Dorsolateral prefrontal cortex (tissue), 120 donors: ENCODE measurements at regions of chr3 and their contacts with region 1.

Region 1: DNA sequence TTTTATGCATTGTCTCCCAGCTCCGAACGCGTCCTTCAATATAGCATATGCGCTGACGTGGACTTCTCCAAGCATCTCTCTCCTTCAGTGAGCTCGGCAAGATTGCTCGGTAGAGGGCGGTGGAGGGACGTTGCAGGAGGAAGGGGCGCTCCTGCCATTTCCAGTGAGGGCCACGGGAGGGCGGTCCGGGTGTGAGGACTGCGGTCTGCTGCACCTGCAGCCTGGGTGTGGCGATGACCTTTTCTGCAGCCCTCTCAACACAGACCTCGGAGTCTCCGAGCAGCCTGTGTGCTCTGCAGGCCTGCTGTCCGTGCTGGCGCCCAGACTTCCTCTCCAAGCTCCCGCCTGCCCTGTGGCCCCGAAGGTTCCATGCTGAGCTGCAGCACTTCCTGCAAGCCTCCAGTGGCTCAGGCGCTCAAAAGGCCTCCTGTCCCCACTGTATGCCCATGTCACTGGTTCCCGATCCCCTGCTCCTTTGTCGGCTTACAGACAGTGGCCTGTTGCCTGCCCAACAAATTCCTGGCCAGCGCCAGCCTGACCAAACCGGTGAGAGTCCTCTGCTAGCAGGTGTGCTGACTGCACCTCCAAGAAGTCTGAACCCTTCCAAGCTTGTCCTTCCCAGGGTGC is 8.9 kb upstream of the RTP3 start:
- DNase-seq: peak; percentile 79 to 91 (median 86)
- H3K4me3 ChIP-seq: peak overlapping the region in 23 of 59 donors; percentile 10 to 48 (median 33)
- H3K27ac ChIP-seq: peak overlapping the region in 2 of 59 donors; percentile 17 to 61
- H3K27me3 ChIP-seq: no peaks in the 10 kb centered on the region
- CTCF ChIP-seq: peak; percentile 29 to 99 (median 95)

Region 2: DNA sequence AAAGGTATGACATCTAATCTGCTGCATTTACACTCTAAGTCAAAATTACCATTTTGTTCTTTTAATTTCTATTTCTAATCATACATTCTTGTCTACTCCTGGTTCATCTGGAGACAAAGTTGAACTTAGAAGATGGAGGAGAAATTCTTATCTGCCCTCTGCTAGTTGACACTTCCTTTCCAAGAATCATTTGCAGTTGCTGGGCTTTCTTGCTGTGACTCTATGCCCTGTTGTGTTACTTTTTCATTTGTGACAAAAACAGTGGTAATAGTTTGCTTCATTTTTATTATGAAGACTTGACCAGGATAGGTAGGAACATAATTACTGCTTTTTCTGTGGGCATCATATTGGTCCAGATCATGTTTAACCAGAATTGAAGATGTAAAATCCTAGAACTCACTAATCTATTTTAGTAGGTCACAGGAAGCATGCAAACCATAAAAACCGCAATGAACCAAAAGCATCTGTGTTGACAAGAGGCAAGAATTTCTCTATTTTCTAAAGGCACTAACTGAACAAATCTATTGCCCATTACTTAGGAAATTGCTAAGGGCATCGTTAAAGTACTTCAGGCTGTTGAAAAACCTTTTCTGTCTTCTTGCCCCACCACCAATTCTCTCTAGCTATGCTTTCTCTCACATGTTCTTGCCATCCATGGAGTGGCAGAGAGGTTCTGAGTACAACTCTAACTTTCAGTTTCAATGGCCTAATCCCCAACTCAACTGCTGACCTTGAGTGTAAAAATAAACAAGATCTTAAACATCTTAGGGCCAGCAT is 139.2 kb before region 1 on chr3:
- intact Hi-C with region 1: no loop called
- DNase-seq: no peak
- H3K4me3 ChIP-seq: no peak overlapping the region
- H3K27ac ChIP-seq: no peak overlapping the region
- H3K27me3 ChIP-seq: peaks cover 0 to 30% (median 5%) of the 10 kb centered on the region in 45 donors
- CTCF ChIP-seq: no peak

Region 3: DNA sequence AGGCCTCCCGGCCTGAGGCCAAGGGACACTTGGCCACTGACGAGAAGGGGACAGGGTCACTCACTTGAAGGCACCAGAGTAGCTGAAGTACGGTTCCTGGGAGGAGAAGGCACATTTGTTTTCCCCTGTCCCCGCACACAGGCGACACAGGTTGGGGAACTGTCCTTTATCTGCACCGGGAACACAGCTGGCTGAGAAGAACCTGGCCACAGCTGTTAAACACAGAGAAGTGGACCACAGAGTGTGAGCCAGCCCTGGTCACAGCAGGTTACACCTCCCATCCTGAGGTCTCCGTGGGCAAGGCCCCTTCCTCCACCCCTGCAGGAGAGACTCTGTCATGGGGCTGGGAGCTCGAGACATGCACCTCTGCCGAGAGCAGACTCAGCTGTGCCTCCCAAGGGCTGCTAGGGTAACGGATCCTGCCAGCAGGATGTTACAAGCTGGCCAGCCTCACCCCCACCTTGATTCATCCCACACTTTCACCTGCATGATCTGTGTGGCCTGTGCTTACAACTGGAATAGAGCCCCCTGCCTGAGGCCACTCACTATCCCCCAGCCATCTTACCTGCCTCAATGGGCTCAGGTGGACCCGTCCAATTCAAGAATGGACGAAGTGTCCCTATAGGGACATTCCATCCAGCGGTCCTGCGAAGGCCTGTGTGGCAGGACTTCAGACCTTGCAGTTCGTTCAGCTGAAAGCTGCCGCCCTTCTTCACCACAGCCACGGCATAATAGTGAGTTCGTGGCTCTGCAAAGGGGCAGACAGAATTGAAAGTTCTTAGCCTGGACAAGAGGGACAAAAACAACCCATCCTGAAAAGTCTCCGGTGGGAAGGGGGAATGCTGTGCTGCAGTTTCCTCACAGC is 33.4 kb before region 1 on chr3:
- intact Hi-C with region 1: no loop called
- DNase-seq: no peak
- H3K4me3 ChIP-seq: no peak overlapping the region
- H3K27ac ChIP-seq: no peak overlapping the region
- H3K27me3 ChIP-seq: peaks cover 0 to 5% (median 0%) of the 10 kb centered on the region in 45 donors
- CTCF ChIP-seq: no peak

Region 4: DNA sequence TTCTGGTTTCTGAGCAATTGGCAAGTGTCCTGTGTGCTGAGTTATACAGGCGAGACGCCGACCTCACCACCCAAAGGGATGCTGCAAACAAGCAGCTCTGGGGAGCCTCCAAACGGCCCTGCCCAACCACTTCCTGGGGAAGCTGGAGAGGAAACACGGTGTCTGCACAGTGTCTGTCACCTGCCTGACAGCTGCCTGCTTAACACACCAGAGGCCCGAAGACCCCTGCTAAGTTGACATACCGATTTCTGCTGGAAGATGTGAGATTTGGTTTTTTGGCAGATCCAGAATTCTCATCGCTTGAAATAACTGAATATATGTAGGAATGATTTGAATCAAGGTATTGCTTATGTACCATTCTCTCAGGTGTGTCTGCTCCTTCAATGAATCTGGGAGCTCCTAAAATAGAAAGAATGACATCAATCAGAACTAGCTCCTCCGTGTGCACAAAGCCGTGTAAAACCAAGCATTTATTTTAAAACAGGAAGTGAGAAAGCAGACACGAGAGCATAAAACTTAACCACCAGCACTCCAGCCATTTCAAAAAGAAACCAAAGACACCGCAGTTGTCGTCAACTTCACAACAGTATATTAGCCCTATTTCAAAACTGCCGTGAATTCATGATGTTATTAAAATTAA is 50.1 kb after region 1 on chr3:
- intact Hi-C with region 1: no loop called
- DNase-seq: peak in 3 of 10 donors; percentile 18 to 52 (median 37)
- H3K4me3 ChIP-seq: no peak overlapping the region
- H3K27ac ChIP-seq: peak overlapping the region in 3 of 59 donors; percentile 7 to 52 (median 14)
- H3K27me3 ChIP-seq: no peaks in the 10 kb centered on the region
- CTCF ChIP-seq: no peak

Region 5: DNA sequence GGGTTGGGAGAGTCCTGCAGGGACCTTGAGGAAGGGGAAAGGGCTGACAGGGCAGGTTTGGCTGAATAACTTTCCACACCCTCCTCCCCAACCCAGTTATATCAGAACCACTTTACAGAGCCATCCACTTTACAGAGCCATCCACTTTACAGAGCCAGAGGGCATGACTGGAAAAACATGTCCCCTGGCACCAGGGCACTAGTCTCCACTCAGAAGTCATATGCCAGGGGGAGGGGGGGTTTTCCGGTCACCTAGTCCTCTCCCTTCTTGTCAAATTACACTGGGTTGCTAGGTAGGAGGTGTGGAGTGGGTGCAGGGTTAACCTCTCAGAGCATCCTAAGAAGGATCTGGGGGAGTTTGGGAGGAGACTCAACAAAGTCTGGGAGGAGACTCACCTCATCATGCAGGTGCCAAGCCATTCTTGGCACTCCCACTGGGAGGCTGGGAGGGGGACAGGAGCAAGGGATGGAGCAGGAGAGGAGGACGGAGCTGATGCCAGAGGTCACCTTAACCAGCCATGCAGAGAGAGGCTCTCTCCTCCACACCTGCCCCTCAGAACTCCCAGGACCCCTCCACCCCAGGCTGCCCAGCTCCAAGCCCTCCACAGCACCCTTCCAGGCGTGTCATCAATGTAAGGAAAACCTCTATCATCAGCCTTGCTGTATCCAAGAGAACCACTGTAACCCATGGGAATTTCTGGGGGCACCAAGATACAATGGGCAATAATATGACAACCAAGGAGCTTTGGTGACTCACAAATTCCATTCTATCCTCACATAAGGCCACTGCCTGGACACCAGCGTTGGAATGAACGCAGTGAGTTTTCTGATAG is 75.6 kb after region 1 on chr3:
- intact Hi-C with region 1: loop called (anchors 5 to 10 kb)
- DNase-seq: no peak
- H3K4me3 ChIP-seq: peak overlapping the region in 9 of 59 donors; percentile 60 to 75 (median 68)
- H3K27ac ChIP-seq: no peak overlapping the region
- H3K27me3 ChIP-seq: peaks cover 0 to 19% (median 0%) of the 10 kb centered on the region in 45 donors
- CTCF ChIP-seq: no peak

Region 6: DNA sequence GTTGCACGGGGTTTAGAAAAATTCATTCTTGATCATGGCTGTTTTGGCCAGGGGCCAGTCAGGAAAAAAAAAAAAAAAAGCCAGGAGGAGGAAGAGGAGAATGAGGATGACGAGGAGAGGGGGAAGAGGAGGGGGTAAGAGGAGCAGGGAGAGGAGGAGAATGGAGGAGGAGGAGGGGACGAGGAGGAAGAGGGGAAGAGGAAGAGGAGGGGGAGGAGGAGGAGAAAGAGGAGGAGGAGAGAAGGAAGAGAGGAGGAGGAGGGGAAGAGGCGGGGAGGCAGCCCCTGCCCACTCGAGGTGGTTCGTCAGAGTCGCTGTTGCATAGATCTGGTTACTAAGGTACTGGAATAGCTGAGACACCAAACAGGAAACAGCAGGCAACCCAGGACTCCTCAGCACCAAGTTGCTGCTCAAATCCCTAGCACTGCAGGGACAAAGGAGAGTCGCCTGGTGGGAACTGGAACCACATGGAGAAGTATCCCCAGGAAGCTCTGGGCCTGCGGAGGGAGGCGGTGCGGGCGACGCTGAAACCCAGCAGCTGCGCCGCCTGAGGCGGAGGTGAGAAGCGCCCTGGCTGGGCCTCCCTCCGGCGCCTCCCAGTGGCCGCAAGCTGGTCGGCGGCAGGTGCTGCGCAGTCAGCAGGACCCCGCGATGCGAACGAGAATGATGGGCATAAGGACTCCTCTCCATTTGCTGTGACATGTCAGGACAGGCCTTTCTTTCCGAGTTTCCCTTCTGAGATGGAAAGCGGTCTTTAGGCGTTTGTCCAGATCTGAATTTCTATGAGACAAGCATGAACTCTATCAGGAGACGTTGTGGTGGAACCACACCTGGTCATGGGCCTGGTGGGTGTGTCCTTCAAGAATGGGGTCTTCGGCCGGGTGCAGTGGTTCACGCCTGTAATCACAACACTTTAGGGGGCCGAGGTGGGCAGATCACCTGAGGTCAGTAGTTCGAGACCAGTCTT is 141.0 kb after region 1 on chr3:
- intact Hi-C with region 1: loop called (anchors 1 to 2 kb)
- DNase-seq: peak; percentile 58 to 86 (median 72)
- H3K4me3 ChIP-seq: peak overlapping the region; percentile 9 to 68 (median 47)
- H3K27ac ChIP-seq: peak overlapping the region in 58 of 59 donors; percentile 10 to 92 (median 83)
- H3K27me3 ChIP-seq: no peaks in the 10 kb centered on the region
- CTCF ChIP-seq: peak; percentile 60 to 99 (median 96)

Region 7: DNA sequence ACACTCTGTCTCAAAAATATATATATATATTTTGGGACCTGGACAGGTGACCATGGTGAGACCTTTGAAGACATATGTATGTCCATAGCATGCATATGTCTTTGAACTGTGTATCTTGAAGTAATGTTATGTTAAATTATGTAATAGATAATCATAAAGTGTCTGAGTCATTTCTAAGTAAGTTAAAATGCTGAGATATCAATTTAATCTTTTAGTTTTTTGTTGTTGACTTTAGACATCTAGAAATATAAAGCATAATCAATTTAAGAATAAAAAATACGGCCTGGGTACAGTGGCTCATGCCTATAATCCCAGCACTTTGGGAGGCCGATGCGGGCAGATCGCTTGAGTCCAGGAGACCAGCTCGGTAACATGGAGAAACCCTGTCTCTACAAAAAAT is 687.7 kb after region 1 on chr3:
- intact Hi-C with region 1: no loop called
- DNase-seq: no peak
- H3K4me3 ChIP-seq: no peak overlapping the region
- H3K27ac ChIP-seq: no peak overlapping the region
- H3K27me3 ChIP-seq: no peaks in the 10 kb centered on the region
- CTCF ChIP-seq: no peak